ENCODE measurements at regions of chr19 and their contacts with region 1.

Region 1: DNA sequence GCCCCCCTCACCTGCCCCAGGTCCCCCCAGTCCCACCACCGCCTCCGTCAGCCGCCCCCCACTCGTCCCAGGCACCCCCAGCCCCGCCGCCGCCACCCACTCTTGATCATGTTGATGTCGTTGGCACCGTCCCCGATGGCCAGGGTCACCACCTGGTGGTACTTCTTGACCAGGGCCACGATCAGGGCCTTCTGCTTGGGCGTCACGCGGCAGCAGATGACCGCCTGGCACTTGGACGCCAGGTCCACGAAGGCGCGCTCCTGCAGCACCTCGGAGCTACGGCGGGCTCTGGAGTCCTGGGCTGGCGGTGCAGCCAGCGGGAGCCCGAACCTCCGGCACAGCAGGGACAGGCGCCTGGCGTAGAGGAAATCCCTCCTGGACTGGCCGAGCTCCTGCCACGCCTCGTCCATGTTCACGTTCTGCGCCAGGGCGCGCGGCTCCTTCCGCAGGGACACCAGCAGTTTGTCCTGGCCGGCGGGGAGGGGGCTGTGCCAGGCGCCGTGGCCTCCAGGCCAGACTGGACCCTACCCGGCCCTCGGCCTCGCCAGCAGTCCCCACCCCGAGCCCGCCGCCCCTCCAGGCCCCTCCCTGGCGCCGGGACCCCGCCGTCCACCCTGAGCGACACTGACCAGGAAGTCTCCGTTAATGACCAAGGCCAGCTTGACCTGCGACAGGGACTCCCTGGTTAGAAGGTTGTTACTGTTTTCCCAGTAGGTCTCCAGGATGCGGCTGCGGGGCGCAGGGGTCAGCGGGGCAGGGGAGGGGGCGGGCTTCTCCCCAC is 22.6 kb downstream of the ATP8B3 start:
- H3K4me3 Mint-ChIP-seq: peak overlapping the region; percentile 48
- H3K27ac Mint-ChIP-seq: no peak overlapping the region
- H3K4me1 Mint-ChIP-seq: peaks cover 9% of the 10 kb centered on the region
- H3K27me3 Mint-ChIP-seq: peaks cover 45% of the 10 kb centered on the region

Region 2: GRCh38 chr19:1825909-1826556 is 36.6 kb after region 1 on chr19:
- intact Hi-C with region 1: loop called (anchors 5 kb)
- H3K4me3 Mint-ChIP-seq: no peak overlapping the region
- H3K27ac Mint-ChIP-seq: no peak overlapping the region
- H3K4me1 Mint-ChIP-seq: peaks cover 13% of the 10 kb centered on the region
- H3K27me3 Mint-ChIP-seq: no peaks in the 10 kb centered on the region

Measured in dendritic cell treated with granulocyte-macrophage colony-stimulating factor and Interleukin-4, amounts not matched to agents 40 ng/mL and 50 ng/mL, for 4 days (primary cell).